Activated CD4-positive, alpha-beta memory T cell treated with anti-CD3 and anti-CD28 coated beads for 36 hours (primary cell): ENCODE measurements at regions of chr9 and their contacts with region 1.

Region 1: GRCh38 chr9:76116913-76117312 is 226.4 kb downstream of the PCSK5 start:
- DNase-seq: peak; percentile 14
- H3K4me3 Mint-ChIP-seq: no peak overlapping the region
- H3K27ac Mint-ChIP-seq: peak overlapping the region; percentile 0
- H3K4me1 Mint-ChIP-seq: peaks cover 14% of the 10 kb centered on the region
- H3K27me3 Mint-ChIP-seq: no peaks in the 10 kb centered on the region

Region 2: GRCh38 chr9:75890472-75891276 is 226.2 kb before region 1 on chr9 and contains the start of gene PCSK5:
- CTCF ChIA-PET with region 1: no interaction called
- POLR2A ChIA-PET with region 1: no interaction called
- intact Hi-C with region 1: loop called (anchors 5 kb)
- DNase-seq: peak; percentile 90
- H3K4me3 Mint-ChIP-seq: peak within 1 kb of the TSS; percentile 91
- H3K27ac Mint-ChIP-seq: peak within 1 kb of the TSS; percentile 61
- H3K4me1 Mint-ChIP-seq: peaks cover 28% of the 10 kb centered on the region
- H3K27me3 Mint-ChIP-seq: peaks cover 13% of the 10 kb centered on the region
- total RNA-seq, gene PCSK5: 2.0 to 2.1 TPM

Region 3: DNA sequence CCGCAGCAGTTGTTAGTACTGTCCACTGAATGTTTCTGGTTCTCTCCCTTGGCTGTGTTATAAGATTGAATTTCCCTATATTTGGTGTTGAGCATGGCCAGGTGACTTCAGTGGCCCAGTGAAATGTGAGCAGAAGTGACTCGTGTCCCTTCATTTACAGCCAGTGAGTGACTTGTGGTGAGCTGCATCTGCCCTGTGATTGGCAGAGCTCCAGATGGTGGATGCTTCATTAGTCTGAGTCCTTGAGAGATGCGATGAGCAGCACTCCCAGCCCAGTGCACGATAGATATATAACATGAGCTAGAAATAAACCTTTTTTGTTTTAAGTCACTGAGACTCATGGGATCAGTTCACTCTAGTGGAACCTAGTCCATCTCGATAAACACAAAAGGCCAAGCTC is 207.1 kb before region 1 on chr9:
- CTCF ChIA-PET with region 1: no interaction called
- POLR2A ChIA-PET with region 1: no interaction called
- intact Hi-C with region 1: loop called (anchors 1 kb)
- DNase-seq: peak; percentile 12
- H3K4me3 Mint-ChIP-seq: no peak overlapping the region
- H3K27ac Mint-ChIP-seq: no peak overlapping the region
- H3K4me1 Mint-ChIP-seq: peaks cover 16% of the 10 kb centered on the region
- H3K27me3 Mint-ChIP-seq: no peaks in the 10 kb centered on the region

Region 4: GRCh38 chr9:75993434-75993833 is 123.5 kb before region 1 on chr9:
- CTCF ChIA-PET with region 1: no interaction called
- POLR2A ChIA-PET with region 1: no interaction called
- intact Hi-C with region 1: loop called (anchors 1 kb)
- DNase-seq: no peak
- H3K4me3 Mint-ChIP-seq: no peak overlapping the region
- H3K27ac Mint-ChIP-seq: no peak overlapping the region
- H3K4me1 Mint-ChIP-seq: peaks cover 32% of the 10 kb centered on the region
- H3K27me3 Mint-ChIP-seq: no peaks in the 10 kb centered on the region

Region 5: DNA sequence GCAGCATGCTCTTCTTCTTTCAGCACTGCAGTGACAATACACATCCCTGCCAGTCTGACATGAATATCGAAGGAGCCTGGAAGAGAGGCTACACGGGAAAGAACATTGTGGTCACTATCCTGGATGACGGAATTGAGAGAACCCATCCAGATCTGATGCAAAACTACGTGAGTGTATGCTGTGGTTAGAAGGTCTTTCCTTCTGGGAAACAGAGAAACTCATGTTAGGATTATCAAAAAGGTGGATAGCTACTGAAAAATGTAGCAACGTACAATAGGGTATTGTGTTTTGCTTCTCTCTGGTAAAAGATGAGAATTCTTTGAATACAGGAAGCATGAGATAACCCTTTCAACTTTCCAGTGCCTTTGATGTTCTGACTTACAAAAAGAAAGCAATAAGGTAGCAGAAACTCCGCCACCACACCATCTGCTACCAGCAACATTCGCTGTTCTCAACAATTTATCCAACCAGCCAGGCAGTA is 93.2 kb before region 1 on chr9:
- CTCF ChIA-PET with region 1: no interaction called
- POLR2A ChIA-PET with region 1: no interaction called
- intact Hi-C with region 1: loop called (anchors 2 kb)
- DNase-seq: peak; percentile 39
- H3K4me3 Mint-ChIP-seq: peak overlapping the region; percentile 53
- H3K27ac Mint-ChIP-seq: peak overlapping the region; percentile 20
- H3K4me1 Mint-ChIP-seq: peaks cover 78% of the 10 kb centered on the region
- H3K27me3 Mint-ChIP-seq: no peaks in the 10 kb centered on the region

Region 6: DNA sequence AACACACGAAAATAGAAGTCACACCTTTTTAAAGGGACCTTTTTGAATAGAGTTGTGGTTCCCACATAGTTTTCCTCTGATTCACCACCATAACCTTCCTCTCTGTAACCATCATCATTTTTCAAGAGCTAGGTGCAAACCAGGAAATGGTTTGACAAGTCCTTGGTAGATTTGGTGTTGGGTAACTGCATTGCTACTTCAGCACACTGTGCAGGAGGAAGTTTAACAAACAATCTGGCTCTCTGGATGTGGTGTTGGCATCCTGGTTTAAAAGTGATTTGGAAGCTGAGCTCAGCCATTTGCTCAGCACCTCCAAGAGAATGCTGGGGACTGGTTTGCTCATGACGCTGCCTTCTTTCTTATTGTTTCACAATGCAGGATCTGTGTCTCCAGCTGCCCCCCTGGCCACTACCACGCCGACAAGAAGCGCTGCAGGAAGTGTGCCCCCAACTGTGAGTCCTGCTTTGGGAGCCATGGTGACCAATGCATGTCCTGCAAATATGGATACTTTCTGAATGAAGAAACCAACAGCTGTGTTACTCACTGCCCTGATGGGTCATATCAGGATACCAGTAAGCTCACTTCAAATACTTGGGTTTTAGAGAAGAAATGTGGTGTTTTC is 64.2 kb after region 1 on chr9:
- CTCF ChIA-PET with region 1: no interaction called
- POLR2A ChIA-PET with region 1: no interaction called
- intact Hi-C with region 1: loop called (anchors 1 kb)
- DNase-seq: no peak
- H3K4me3 Mint-ChIP-seq: no peak overlapping the region
- H3K27ac Mint-ChIP-seq: no peak overlapping the region
- H3K4me1 Mint-ChIP-seq: peaks cover 7% of the 10 kb centered on the region
- H3K27me3 Mint-ChIP-seq: no peaks in the 10 kb centered on the region